AG04450 (cell line): ENCODE measurements at regions of chr1 and their contacts with region 1.

Region 1: DNA sequence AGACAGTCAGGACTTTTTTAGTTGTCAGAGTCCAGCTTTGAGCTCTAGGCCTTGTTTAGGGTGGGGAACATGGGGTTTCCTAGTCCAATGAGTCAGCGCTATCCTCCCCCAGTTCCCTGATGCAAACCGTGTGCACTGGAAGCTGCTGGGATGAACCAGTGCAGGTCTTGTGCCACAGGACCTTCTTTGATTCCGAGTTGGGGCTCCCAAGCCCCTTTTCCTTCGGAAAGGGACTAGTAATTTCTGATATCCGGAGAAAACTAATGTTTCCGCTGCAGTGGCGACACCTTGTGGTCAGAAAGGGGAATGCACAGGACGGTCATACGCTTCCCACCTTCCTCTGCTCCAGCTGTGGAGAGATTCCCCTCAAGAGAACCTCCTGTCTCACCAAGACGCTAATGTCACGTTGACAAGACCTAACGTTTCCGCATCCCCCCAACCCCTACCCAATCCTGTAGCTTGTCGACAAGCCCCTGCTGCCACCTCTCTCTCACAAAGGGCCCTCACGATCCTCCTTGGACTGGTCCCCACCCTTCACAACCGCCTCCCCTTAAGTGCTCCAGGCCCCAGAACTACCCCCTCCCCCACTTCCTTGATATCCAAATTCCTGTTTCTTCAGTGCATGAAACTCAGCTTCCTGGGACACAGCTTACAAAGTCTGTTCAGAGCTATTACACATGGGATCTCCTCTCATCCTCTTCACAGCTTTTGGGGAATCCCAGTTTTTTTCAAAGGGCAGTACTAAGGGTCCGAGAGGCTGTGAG is 30.9 kb downstream of the GPA33 start:
- DNase-seq: peak; percentile 27
- H3K4me3 ChIP-seq: no peak overlapping the region
- H3K27ac ChIP-seq: no peak overlapping the region
- H3K27me3 ChIP-seq: no peaks in the 10 kb centered on the region
- CTCF ChIP-seq: peak; percentile 97

Region 2: DNA sequence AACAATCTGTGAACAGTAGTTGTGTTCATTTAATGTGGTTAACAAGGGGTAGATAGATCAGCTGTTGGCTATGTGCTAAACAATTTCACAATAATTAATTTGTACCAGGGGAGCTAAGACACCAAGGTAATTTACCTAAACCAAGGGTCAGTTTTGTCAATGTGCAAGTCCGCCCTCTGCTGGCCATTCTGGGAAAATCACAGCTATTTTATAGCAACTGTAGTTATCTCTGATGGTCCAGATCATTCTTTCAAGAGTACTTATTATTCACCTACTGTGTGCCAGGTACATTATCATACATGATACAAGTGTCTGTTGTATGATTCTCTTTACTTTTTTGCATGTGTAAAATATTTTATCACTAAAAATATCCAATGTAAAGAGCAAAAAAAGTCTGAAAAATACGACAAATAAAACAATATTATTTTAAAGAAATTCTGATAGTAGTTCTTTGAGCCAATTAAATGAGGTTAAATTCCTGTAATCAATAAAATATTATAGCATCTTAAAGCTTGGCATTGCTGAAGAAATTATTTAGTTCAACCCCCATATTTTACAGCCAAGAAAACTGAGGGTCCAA is 580.1 kb before region 1 on chr1:
- CTCF ChIA-PET with region 1: interaction called, 15 read pairs
- POLR2A ChIA-PET with region 1: no interaction called
- DNase-seq: peak; percentile 6
- H3K4me3 ChIP-seq: no peak overlapping the region
- H3K27ac ChIP-seq: no peak overlapping the region
- H3K27me3 ChIP-seq: no peaks in the 10 kb centered on the region
- CTCF ChIP-seq: peak; percentile 75

Region 3: DNA sequence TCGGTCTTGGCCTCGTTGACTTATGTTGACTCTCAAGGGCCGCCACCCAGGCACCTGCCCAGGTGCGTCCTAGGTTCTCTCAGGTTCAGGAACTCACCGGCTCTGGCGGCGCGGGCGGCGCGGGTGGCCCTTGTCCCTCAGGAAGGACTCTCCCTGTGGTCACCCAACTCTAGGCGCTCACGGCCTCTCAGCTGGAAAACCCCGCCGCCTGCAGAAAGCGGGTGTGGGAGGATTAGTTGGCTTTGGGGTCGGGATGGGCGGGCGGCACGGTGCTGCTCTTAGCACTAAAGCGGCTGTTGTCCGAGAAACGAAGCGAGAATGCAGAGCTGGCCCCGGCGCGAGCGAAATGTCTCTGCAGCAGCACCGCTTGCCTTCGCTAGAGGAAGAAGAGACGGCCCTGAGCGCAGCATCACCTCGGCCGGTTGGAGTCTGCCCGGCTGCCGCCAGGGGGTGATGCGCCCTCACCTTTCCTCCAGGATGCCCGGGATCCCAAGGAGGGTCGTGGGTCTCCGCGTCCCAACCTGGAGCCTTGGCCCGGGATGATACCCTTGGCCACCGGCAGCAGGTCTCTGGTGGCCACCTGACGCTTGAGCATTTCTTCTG is 175.1 kb before region 1 on chr1:
- CTCF ChIA-PET with region 1: interaction called, 37 read pairs
- POLR2A ChIA-PET with region 1: no interaction called
- DNase-seq: no peak
- H3K4me3 ChIP-seq: no peak overlapping the region
- H3K27ac ChIP-seq: no peak overlapping the region
- H3K27me3 ChIP-seq: peaks cover 26% of the 10 kb centered on the region
- CTCF ChIP-seq: peak; percentile 63

Region 4: DNA sequence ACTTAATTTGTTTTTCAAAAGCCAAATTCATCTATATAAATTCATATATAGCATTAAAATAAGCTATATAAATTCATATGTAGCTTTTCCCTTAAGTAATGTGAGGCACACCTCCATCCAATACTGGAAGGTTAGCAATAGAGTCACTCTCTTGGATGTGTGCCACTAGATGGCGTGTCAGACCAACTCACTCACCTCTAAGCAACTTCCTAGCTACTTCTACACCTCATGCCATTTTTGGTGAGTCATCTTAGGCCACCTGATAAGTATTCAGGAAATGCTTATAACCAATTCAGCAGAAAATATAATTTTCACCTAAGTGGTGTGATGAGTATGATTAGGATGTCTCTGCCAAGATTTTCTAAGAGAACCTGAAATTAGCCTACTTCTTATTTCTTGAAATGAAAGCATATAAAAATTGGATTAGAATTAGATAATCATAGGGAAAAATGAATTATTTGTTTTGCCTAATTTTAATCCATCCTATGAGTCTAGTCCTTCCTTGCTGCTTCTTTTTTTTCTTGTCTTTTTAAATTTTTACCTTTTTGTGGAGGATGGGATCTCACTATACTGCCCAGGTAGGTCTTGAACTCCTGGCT is 148.7 kb before region 1 on chr1:
- CTCF ChIA-PET with region 1: interaction called, 284 read pairs
- POLR2A ChIA-PET with region 1: no interaction called
- DNase-seq: peak; percentile 43
- H3K4me3 ChIP-seq: no peak overlapping the region
- H3K27ac ChIP-seq: no peak overlapping the region
- H3K27me3 ChIP-seq: no peaks in the 10 kb centered on the region
- CTCF ChIP-seq: peak; percentile 67

Region 5: GRCh38 chr1:167043752-167044488 is 15.3 kb before region 1 on chr1:
- CTCF ChIA-PET with region 1: interaction called, 10 read pairs
- POLR2A ChIA-PET with region 1: no interaction called
- DNase-seq: no peak
- H3K4me3 ChIP-seq: no peak overlapping the region
- H3K27ac ChIP-seq: no peak overlapping the region
- H3K27me3 ChIP-seq: peaks cover 7% of the 10 kb centered on the region
- CTCF ChIP-seq: no peak

Region 6: GRCh38 chr1:167082511-167083027 is 23.3 kb after region 1 on chr1:
- CTCF ChIA-PET with region 1: interaction called, 5 read pairs
- POLR2A ChIA-PET with region 1: interaction called, 10 read pairs
- DNase-seq: no peak
- H3K4me3 ChIP-seq: no peak overlapping the region
- H3K27ac ChIP-seq: no peak overlapping the region
- H3K27me3 ChIP-seq: peaks cover 2% of the 10 kb centered on the region
- CTCF ChIP-seq: no peak